ENCODE measurements at regions of chr1 and their contacts with region 1.

Region 1: DNA sequence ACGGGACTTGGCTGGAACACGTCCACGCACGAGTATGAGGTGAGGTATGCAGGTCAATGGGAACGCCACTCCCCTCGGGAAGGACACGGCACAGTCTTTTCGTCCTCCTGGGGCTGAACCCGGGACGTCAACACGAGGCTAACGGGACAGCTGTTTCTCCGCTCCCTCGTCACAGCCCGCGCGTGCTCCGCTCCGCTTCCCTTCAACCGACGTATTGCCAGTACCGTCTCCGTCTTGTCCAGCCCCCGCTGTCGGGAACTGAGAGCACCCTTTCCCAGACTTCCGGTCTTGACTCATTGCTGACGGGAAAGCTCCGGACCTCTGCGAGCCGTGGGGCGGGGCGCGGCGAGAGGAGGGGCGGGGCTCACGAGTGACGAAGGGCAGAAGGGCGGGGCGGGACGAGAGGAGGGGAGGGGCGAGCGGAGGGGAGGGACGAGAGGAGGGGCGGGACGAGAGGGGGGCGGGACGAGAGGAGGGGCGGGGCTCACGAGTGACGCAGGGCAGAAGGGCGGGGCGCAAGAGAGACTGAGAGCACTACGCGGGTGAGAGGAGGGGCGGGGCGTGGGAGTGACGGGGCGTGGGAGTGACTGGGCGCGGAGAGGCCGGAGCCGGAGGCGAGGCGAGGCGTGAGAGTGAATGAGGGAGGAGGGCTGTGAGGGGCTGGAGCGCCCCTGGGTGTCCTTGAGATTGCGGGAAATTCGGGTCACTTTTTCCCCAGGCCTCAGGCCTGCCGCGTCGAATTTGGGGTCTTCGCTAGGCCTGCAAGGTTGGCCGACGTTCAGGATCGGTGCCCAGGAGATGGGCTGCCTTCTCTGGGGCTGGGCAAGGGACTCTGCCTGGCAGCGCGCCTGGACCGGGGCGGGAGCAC is 22.2 kb upstream of the CFAP126 start:
- DNase-seq: peak; percentile 98 to 99 (median 99)
- ATAC-seq: peak; percentile 96
- H3K4me3 ChIP-seq: peak overlapping the region; percentile 61
- H3K27ac ChIP-seq: peak overlapping the region; percentile 94
- H3K4me1 ChIP-seq: no peaks in the 10 kb centered on the region
- H3K27me3 ChIP-seq: no peaks in the 10 kb centered on the region

Region 2: GRCh38 chr1:161192476-161193465 is 197.2 kb before region 1 on chr1:
- intact Hi-C with region 1: loop called in 1 of 4 experiments (anchors 10 kb)
- DNase-seq: peak in 2 of 3 donors; percentile 71 to 76
- ATAC-seq: peak; percentile 12 to 49
- H3K4me3 ChIP-seq: no peak overlapping the region
- H3K27ac ChIP-seq: no peak overlapping the region
- H3K4me1 ChIP-seq: no peaks in the 10 kb centered on the region
- H3K27me3 ChIP-seq: no peaks in the 10 kb centered on the region

Region 3: GRCh38 chr1:161549652-161550051 is 159.7 kb after region 1 on chr1 and contains the start of gene FCGR3A:
- intact Hi-C with region 1: no loop called
- DNase-seq: peak in 1 of 3 donors; percentile 20
- ATAC-seq: peak; percentile 42 to 50
- H3K4me3 ChIP-seq: no peak within 1 kb of the TSS
- H3K27ac ChIP-seq: peak within 1 kb of the TSS; percentile 8
- H3K4me1 ChIP-seq: no peaks in the 10 kb centered on the region
- H3K27me3 ChIP-seq: no peaks in the 10 kb centered on the region
- total RNA-seq, gene FCGR3A: 42.7 to 73.9 (median 69.1) TPM

Measured in right cardiac atrium (tissue), 5 donors.